Naive thymus-derived CD4-positive, alpha-beta T cell (primary cell): ENCODE measurements at regions of chr16 and their contacts with region 1.

Region 1: GRCh38 chr16:73058221-73058615 is 10.3 kb upstream of the ZFHX3 start:
- DNase-seq: peak in 4 of 9 donors; percentile 11 to 55 (median 20)
- ATAC-seq: peak; percentile 63
- H3K4me3 ChIP-seq: no peak overlapping the region
- H3K4me3 Mint-ChIP-seq: peak overlapping the region in 9 of 10 donors; percentile 29 to 94 (median 54)
- H3K27ac ChIP-seq: no peak overlapping the region
- H3K27ac Mint-ChIP-seq: no peak overlapping the region
- H3K4me1 ChIP-seq: peaks cover 0 to 3% of the 10 kb centered on the region in 2 donors
- H3K4me1 Mint-ChIP-seq: peaks cover 19 to 40% (median 30%) of the 10 kb centered on the region in 7 donors
- H3K27me3 ChIP-seq: peaks cover 0 to 12% of the 10 kb centered on the region in 2 donors
- H3K27me3 Mint-ChIP-seq: peaks cover 41 to 77% (median 62%) of the 10 kb centered on the region in 5 donors

Region 2: GRCh38 chr16:72921630-72922029 is 136.6 kb before region 1 on chr16:
- CTCF ChIA-PET with region 1: no interaction called
- POLR2A ChIA-PET with region 1: no interaction called
- intact Hi-C with region 1: loop called in 1 of 2 experiments (anchors 5 kb)
- DNase-seq: no peak
- ATAC-seq: no peak
- H3K4me3 ChIP-seq: no peak overlapping the region
- H3K4me3 Mint-ChIP-seq: peak overlapping the region in 8 of 10 donors; percentile 12 to 81 (median 68)
- H3K27ac ChIP-seq: no peak overlapping the region
- H3K27ac Mint-ChIP-seq: peak overlapping the region in 4 of 9 donors; percentile 26 to 86 (median 68)
- H3K4me1 ChIP-seq: no peaks in the 10 kb centered on the region
- H3K4me1 Mint-ChIP-seq: peaks cover 6 to 29% (median 11%) of the 10 kb centered on the region in 7 donors
- H3K27me3 ChIP-seq: peaks cover 0 to 2% of the 10 kb centered on the region in 2 donors
- H3K27me3 Mint-ChIP-seq: peaks cover 0 to 18% (median 0%) of the 10 kb centered on the region in 5 donors